ENCODE measurements at regions of chr16 and their contacts with region 1.

Region 1: DNA sequence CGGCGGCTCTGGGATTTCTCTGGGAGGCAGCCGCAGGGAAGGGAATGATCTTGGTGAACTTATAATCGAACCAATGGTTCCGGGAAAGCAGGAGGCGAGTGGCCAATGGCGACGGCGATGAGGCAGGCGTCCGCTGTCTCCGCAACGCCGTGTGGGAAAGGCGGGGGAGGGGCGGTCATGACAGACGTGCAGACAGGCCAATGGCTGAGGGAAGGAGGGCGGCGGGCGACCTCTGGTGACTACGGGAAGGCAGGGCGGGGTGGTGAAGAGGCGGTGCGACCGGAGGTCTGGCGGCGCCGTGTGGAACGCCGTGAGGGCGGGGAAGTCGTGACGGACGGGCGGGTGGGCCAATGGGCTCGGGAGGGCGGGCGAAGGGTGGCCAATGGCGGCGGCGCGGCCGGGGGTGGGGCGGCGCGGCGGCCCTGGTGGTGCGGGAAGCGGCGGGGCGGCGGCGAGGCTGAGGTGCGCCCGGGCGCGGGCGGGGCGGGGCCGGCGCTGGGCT is at the start of gene RAB40C:
- H3K4me3 Mint-ChIP-seq: peak within 1 kb of the TSS; percentile 93
- H3K27ac Mint-ChIP-seq: peak within 1 kb of the TSS; percentile 99
- H3K4me1 Mint-ChIP-seq: peaks cover 60% of the 10 kb centered on the region
- H3K27me3 Mint-ChIP-seq: peaks cover 16% of the 10 kb centered on the region

Region 2: DNA sequence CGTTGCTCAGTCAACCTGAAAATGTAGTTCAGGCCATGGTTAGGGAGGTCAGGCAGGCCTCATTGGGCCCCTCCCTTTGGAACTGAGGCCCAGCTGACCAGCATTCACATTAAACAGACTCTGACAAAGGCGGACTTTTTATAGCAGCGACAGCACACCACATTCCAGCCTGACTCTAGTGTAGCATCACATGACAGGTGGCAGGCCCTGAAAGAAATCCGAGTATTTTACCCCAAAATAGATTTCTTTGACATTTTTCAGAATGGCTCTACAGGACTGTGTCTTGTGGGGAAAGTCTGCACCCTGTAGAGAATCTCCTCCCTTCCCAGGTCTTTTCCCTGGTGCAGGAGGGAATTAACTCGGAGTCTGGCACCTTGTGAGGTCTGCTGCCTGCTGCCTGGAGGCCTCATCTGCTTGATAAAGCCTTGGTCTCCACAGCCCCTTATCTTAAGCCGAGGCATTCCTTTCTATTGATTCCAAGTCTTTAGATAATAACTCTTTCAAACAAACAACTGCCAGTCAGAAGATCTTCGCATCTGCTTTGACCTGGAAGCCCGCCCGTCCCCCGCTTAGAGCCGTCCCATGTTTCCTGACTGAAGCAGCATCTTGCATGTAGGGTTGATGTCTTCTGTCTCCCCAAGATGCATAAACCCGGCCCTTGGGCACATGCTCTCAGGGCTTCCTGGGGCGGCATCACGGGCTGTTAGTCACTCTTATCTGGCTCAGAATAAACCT is 106.2 kb before region 1 on chr16:
- intact Hi-C with region 1: no loop called
- H3K4me3 Mint-ChIP-seq: no peak overlapping the region
- H3K27ac Mint-ChIP-seq: no peak overlapping the region
- H3K4me1 Mint-ChIP-seq: no peaks in the 10 kb centered on the region
- H3K27me3 Mint-ChIP-seq: no peaks in the 10 kb centered on the region

Region 3: DNA sequence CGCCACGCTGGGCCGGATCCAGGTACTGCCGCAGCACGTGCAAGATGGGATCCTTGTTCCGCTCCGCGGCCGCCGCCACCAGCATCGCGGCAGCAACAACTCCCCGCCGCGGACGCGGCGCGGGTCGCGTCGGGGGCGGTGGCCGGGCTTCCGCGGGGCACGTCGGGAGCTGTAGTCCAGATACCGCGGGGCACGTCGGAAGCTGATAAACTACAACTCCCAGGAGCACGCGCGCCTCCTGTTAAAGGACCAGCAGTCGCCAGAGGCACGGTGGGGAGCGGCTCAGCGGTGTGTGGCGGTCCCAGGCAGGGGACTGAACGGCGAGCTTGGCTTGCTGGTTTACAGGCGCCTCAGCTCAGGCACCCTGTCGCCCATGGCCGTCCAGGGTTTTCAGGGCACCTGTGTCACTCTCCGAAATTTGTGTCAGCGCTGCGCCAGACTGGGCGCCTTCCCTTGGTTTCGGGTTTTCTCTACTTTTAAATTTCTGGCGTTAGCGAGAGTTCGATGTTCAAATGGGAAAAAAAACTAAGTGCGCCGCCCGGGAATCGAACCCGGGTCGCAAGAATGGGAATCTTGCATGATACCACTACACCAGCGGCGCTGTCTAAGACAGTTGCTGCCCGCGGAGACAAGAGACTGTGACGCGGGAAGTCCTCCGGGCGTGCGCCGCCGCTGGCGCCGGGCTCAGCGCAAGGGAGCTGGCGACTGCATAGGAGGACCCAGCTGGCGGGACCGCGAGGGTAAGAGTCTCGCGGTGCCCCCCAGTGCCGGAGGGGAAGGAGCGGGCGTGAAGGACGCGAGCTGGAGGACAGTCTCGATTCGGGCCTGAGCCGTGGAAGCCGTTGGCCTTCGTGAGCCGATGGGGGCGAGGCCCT is 46.7 kb after region 1 on chr16 and contains the start of gene METTL26:
- intact Hi-C with region 1: loop called (anchors 1 kb)
- H3K4me3 Mint-ChIP-seq: peak within 1 kb of the TSS; percentile 97
- H3K27ac Mint-ChIP-seq: peak within 1 kb of the TSS; percentile 94
- H3K4me1 Mint-ChIP-seq: peaks cover 30% of the 10 kb centered on the region
- H3K27me3 Mint-ChIP-seq: peaks cover 7% of the 10 kb centered on the region

Region 4: GRCh38 chr16:648781-649589 is 59.3 kb after region 1 on chr16 and contains the start of gene WDR90:
- intact Hi-C with region 1: loop called (anchors 1 kb)
- H3K4me3 Mint-ChIP-seq: peak within 1 kb of the TSS; percentile 81
- H3K27ac Mint-ChIP-seq: peak within 1 kb of the TSS; percentile 87
- H3K4me1 Mint-ChIP-seq: peaks cover 64% of the 10 kb centered on the region
- H3K27me3 Mint-ChIP-seq: no peaks in the 10 kb centered on the region

Measured in dendritic cell treated with granulocyte-macrophage colony-stimulating factor and Interleukin-4, amounts not matched to agents 40 ng/mL and 50 ng/mL, for 4 days (primary cell).